ENCODE measurements at regions of chr22 and their contacts with region 1.

Region 1: DNA sequence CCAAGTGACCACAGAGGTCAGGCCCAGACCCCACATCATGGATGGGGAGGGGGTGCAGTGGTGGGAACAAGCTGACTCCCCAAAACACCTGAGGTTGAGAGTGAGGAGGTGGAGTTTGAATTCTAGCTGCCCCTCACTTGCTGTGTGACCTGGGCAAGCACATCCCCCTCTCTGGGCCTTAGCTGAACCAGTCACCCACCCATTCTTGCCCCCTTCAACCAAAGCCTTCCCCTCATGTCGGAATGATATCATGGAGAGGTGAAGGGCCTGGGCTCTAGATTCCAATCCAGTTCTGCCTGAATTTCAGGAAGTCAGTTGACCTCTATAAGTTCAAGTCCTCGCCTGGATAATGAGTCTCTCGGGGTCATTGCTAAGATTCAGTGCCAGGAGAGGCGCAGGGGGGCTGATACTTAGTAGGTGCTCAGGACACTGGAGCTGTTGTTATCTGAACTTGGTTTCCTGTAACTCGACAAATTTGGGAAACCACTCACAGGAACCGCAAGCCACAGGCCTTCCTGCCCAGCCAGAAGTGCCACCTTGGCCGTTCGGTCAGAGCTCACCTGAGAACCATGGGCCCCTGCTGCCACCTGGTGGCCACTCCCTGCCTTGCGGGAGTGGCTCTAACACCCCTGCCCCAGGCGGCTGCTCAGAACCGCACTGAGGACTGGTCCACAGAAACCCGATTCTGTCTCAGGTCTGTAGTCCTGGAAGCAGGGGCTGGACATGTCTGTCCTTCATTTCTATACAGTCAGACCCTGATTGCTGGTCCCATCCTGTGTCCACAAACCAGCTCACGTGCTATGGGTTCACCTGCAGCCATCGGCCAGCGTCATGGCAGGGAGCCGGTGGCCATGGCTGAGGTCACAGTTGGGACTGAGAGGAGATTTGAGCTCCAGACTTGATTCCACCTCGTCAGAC is 6.9 kb downstream of the CDC42EP1 start:
- DNase-seq: peak; percentile 95
- H3K4me3 Mint-ChIP-seq: peak overlapping the region; percentile 38
- H3K27ac Mint-ChIP-seq: peak overlapping the region; percentile 81
- H3K4me1 Mint-ChIP-seq: peaks cover 23% of the 10 kb centered on the region
- H3K27me3 Mint-ChIP-seq: peaks cover 100% of the 10 kb centered on the region

Region 2: GRCh38 chr22:37538590-37539357 is 28.4 kb before region 1 on chr22:
- CTCF ChIA-PET with region 1: interaction called, 411 read pairs
- DNase-seq: peak; percentile 93
- H3K4me3 Mint-ChIP-seq: no peak overlapping the region
- H3K27ac Mint-ChIP-seq: no peak overlapping the region
- H3K4me1 Mint-ChIP-seq: peaks cover 41% of the 10 kb centered on the region
- H3K27me3 Mint-ChIP-seq: peaks cover 67% of the 10 kb centered on the region

Measured in activated naive CD4-positive, alpha-beta T cell treated with anti-CD3 and anti-CD28 coated beads, Interleukin-2, amount 10 ng/mL, durations not matched to agents 7 days and 5 days (primary cell).